GM10248 (cell line): ENCODE measurements at regions of chr6 and their contacts with region 1.

Region 1: GRCh38 chr6:13711733-13712598 is at the start of gene RANBP9:
- DNase-seq: peak; percentile 89
- CTCF ChIP-seq: no peak

Region 2: GRCh38 chr6:13696226-13696625 is 15.7 kb before region 1 on chr6:
- CTCF ChIA-PET with region 1: interaction called, 12 read pairs
- POLR2A ChIA-PET with region 1: no interaction called
- DNase-seq: no peak
- CTCF ChIP-seq: no peak